WTC11 (cell line): ENCODE measurements at regions of chr17 and their contacts with region 1.

Region 1: DNA sequence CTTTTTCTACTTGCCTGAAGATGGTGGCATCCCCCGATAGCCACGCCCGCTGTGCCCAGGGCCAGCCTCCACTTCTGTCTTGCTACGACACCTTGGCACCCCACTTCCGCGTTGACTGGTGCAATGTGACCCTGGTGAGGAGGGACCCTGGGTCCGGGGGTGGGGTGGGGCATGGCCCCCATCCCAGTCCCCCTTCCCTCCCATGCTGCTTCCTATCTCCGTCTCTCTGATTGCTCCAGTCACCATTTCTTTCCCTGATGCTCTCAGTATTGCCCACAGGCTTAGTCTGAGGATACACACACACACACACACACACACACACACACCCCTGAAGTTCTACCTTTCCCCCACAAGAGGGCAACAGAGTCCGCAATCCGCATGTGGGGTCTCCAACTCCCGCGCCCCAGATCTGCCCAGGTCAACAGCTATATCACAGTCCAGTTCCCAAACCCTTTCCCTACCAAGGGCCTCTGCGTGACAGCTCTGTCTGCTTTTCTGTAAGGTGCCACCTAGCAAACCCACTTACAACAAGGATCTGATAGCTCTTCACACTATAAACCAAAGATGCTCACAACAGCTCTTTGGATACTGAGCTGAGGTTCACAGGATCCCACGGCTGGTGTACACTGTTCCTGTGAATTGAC is 3.4 kb downstream of the SGCA start:
- DNase-seq: peak; percentile 71
- ATAC-seq: peak; percentile 74
- H3K4me3 Mint-ChIP-seq: no peak overlapping the region
- H3K27ac Mint-ChIP-seq: no peak overlapping the region
- H3K4me1 Mint-ChIP-seq: peaks cover 13% of the 10 kb centered on the region
- H3K27me3 Mint-ChIP-seq: no peaks in the 10 kb centered on the region
- CTCF ChIP-seq: peak; percentile 44

Region 2: GRCh38 chr17:50129728-50130558 is 39.3 kb before region 1 on chr17 and contains the start of gene SAMD14:
- CTCF ChIA-PET with region 1: interaction called, 11 read pairs
- POLR2A ChIA-PET with region 1: no interaction called
- DNase-seq: no peak
- ATAC-seq: peak; percentile 16
- H3K4me3 Mint-ChIP-seq: peak within 1 kb of the TSS; percentile 97
- H3K27ac Mint-ChIP-seq: no peak within 1 kb of the TSS
- H3K4me1 Mint-ChIP-seq: peaks cover 48% of the 10 kb centered on the region
- H3K27me3 Mint-ChIP-seq: peaks cover 26% of the 10 kb centered on the region
- CTCF ChIP-seq: no peak
- total RNA-seq, gene SAMD14: 4.5 to 6.0 TPM (median 5.9 TPM) in 3 replicates

Region 3: GRCh38 chr17:50213026-50214022 is 44.1 kb after region 1 on chr17:
- CTCF ChIA-PET with region 1: interaction called, 10 read pairs
- POLR2A ChIA-PET with region 1: no interaction called
- DNase-seq: peak; percentile 56
- ATAC-seq: peak; percentile 71
- H3K4me3 Mint-ChIP-seq: no peak overlapping the region
- H3K27ac Mint-ChIP-seq: no peak overlapping the region
- H3K4me1 Mint-ChIP-seq: peaks cover 48% of the 10 kb centered on the region
- H3K27me3 Mint-ChIP-seq: peaks cover 10% of the 10 kb centered on the region
- CTCF ChIP-seq: no peak

Region 4: DNA sequence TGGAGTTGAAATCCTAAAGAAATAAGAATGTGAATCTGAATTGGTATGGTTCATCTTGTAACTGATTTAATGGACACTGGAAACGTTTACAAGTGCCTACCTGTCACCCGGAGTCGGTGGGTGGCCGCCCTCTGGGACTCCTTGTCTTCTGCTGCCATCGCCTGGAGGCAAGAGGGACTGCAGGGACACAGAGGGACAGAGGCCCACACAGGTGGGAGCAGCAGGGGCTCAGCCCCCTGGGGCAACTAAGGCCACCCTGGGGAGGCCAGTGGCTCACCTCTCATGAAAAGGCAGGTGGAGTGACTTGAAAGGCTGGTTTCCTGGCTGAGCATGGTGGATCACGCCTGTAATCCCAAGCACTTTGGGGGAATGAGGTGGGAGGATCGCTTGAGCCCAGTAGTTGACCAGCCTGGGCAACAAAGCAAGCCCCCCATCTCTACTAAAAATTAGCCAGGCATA is 128.2 kb after region 1 on chr17:
- CTCF ChIA-PET with region 1: interaction called, 23 read pairs
- POLR2A ChIA-PET with region 1: no interaction called
- DNase-seq: peak; percentile 91
- ATAC-seq: peak; percentile 94
- H3K4me3 Mint-ChIP-seq: no peak overlapping the region
- H3K27ac Mint-ChIP-seq: no peak overlapping the region
- H3K4me1 Mint-ChIP-seq: peaks cover 11% of the 10 kb centered on the region
- H3K27me3 Mint-ChIP-seq: peaks cover 7% of the 10 kb centered on the region
- CTCF ChIP-seq: peak; percentile 92

Region 5: DNA sequence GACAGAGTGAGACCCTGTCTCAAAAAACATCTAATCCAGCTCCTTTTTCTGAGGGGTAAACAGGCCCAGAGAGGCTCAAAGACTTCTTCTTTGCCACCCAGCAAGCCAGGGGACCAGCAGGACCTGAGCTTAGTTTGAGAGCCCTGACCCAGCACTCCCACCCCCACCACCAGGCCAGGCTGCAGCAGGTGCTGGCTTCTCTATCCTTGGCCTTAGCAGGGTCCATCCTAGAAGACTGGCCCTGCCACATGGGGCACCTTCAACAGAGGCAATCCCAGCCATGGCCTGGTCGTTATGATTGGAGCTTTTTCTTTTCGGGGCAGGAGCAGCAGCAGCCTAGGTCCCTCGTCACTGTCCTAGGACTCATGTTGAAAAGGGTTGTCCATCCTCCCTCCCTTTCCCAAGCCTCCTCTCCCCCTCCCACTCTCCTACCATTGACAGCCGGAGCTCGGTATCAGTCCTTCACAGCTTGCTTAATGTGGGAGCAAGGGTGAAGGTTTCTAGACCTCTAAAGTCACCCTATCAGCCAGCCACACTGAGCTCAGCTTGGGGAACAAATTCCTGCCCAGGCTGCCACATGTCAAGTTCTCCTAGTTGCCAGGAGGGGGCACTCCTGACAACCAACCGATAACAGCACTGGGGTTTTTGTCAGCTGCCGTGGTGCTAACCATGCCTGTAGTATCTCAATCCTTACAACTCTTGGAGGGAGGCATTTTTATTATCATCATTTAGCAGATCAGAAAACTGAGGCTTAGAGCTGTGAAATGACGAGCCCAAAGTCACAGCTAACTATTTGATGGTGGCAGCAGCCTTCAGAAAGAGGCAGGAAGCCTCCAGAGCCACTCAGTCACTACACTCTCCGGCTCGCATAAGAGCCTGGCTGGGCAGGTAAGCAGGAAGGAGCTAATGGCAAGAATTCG is 192.6 kb after region 1 on chr17:
- CTCF ChIA-PET with region 1: interaction called, 19 read pairs
- POLR2A ChIA-PET with region 1: no interaction called
- DNase-seq: peak; percentile 61
- ATAC-seq: peak; percentile 43
- H3K4me3 Mint-ChIP-seq: no peak overlapping the region
- H3K27ac Mint-ChIP-seq: peak overlapping the region; percentile 91; the same call in 1 of the 2 replicates
- H3K4me1 Mint-ChIP-seq: peaks cover 36% of the 10 kb centered on the region
- H3K27me3 Mint-ChIP-seq: no peaks in the 10 kb centered on the region
- CTCF ChIP-seq: peak; percentile 60